Common myeloid progenitor, CD34-positive (primary cell): ENCODE measurements at regions of chr9 and their contacts with region 1.

Region 1: DNA sequence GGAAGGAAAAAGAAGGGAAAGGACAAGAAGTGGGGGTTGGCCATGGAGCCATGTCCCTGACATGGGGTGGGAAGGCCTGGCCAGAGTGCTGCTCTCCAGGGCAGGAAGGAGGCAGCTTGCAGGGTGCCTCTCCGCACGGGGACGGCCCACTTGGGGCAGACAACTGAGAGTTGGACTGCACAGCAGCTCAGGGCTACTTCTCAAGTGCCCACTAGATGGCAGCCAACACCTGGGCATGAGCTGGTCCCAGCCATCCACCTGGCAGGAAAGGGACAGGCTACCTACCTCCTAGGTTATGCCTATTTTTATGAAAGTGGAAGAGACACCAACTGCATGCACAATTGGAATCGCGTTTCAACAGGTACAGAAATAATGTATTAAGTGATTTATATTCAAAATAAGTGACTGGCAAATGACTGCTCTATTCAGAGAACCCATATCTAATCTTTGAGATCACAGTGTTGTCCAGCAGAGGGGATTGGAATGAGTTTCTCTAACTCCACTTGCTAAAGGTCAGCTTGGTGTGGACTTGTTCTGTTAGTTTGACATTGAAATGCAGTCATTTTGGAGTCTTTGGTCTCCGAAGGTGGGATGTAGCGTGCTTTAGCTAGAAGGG is 113.4 kb downstream of the SYK start:
- DNase-seq: peak; percentile 73 to 80 (median 77)
- H3K4me3 ChIP-seq: no peak overlapping the region
- H3K27ac ChIP-seq: no peak overlapping the region
- H3K4me1 ChIP-seq: peaks cover 0 to 10% (median 7%) of the 10 kb centered on the region in 4 experiments
- H3K27me3 ChIP-seq: no peaks in the 10 kb centered on the region

Region 2: DNA sequence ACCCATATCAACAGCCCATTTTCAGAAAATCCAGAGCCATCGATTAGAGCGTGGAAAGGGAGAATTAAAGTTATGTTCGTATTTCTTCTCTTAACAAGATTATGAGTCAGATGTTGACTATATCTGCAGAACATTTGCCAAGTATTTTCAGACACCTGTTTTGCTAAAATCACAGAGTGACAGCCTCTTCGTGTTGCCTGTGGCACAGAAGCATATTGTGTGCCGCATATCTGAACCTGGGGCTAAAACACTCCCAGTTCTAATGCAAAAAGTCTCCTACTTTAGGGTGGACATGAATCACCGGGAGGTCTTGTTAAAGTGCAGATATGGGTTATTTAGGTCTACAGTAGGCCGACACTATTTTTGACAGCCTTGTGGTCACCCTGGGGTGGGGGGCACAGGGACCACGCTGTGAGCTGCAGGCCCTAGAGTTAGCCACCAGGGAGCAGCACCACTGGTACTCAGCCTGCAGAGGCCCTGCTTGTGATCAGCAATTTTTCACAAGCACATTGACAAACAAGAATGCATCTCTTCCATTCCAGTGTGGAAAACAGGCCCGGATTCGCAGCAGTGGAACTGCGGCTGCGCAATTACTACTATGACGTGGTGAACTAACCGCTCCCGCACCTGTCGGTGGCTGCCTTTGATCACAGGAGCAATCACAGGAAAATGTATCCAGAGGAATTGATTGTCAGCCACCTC is 19.8 kb before region 1 on chr9:
- CTCF ChIA-PET with region 1: interaction called, 10 read pairs
- POLR2A ChIA-PET with region 1: no interaction called
- DNase-seq: peak in 2 of 3 donors; percentile 38 to 43
- H3K4me3 ChIP-seq: no peak overlapping the region
- H3K27ac ChIP-seq: no peak overlapping the region
- H3K4me1 ChIP-seq: no peaks in the 10 kb centered on the region
- H3K27me3 ChIP-seq: no peaks in the 10 kb centered on the region

Region 3: DNA sequence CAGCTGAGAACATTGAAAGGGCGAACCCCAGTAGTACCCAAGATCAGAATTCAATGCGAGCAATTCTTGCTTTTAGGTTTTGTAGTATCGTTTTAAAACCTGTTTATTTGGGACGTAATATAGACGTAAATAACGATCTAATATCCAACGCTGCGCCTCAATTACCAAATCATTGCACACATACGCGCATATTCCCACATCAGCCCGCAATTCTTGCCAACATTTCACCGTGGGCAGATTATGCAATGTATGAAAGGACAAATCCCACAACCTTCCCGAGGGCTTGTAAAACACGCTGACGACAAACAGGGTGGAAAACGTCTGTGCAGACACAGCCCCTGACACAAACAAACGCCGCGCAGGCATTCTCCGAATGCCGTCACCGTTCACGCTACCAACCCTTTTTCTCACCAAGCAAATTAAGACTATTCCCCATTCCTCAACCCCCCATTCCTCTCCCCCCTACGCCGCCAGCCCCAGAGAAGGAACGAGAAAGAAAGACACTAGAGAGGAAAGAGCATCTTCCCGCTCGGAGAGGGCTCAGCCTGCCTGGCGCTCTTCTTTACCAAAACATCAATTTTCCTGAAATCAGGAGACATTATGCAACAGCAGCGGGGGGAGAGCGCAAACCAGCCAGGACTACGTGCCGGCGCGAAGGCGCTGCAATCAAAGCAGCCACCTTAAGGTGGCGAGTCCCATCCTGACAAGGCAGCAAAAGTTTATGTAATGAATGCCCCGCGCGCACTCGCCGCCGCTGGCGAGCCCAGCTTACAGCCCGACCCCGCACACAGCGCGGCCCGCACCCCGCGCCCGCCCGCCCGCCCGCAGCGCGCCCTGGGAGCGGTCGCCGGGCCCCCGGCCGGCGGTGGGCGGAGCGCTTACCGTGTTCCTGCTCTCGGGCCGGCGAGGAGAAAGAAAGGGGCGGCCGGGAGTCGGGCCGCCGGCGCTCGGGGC is 508.1 kb after region 1 on chr9:
- CTCF ChIA-PET with region 1: interaction called, 127 read pairs
- POLR2A ChIA-PET with region 1: no interaction called
- DNase-seq: peak; percentile 73 to 87 (median 82)
- H3K4me3 ChIP-seq: peak overlapping the region; percentile 51 to 98 (median 79)
- H3K27ac ChIP-seq: peak overlapping the region in 1 of 2 experiments; percentile 60
- H3K4me1 ChIP-seq: peaks cover 28 to 48% (median 42%) of the 10 kb centered on the region in 4 experiments
- H3K27me3 ChIP-seq: peaks cover 11 to 58% (median 16%) of the 10 kb centered on the region in 5 experiments

Region 4: GRCh38 chr9:91681461-91682305 is 766.7 kb after region 1 on chr9:
- CTCF ChIA-PET with region 1: interaction called, 15 read pairs
- POLR2A ChIA-PET with region 1: no interaction called
- DNase-seq: peak; percentile 76 to 87 (median 85)
- H3K4me3 ChIP-seq: peak overlapping the region in 6 of 7 experiments; percentile 25 to 71 (median 50)
- H3K27ac ChIP-seq: no peak overlapping the region
- H3K4me1 ChIP-seq: peaks cover 0 to 9% (median 2%) of the 10 kb centered on the region in 4 experiments
- H3K27me3 ChIP-seq: peaks cover 0 to 4% (median 0%) of the 10 kb centered on the region in 5 experiments

Region 5: GRCh38 chr9:91727316-91727861 is 812.4 kb after region 1 on chr9:
- CTCF ChIA-PET with region 1: interaction called, 31 read pairs
- POLR2A ChIA-PET with region 1: no interaction called
- DNase-seq: peak; percentile 53 to 64 (median 59)
- H3K4me3 ChIP-seq: no peak overlapping the region
- H3K27ac ChIP-seq: no peak overlapping the region
- H3K4me1 ChIP-seq: no peaks in the 10 kb centered on the region
- H3K27me3 ChIP-seq: no peaks in the 10 kb centered on the region